Naive thymus-derived CD4-positive, alpha-beta T cell (primary cell): ENCODE measurements at regions of chr17 and their contacts with region 1.

Region 1: GRCh38 chr17:16521070-16521727 is 29.2 kb upstream of the LRRC75A start:
- DNase-seq: peak; percentile 21 to 71 (median 62)
- ATAC-seq: peak; percentile 95
- H3K4me3 ChIP-seq: no peak overlapping the region
- H3K4me3 Mint-ChIP-seq: no peak overlapping the region
- H3K27ac ChIP-seq: no peak overlapping the region
- H3K27ac Mint-ChIP-seq: peak overlapping the region in 1 of 9 donors; percentile 2
- H3K4me1 ChIP-seq: no peaks in the 10 kb centered on the region
- H3K4me1 Mint-ChIP-seq: peaks cover 0 to 13% (median 5%) of the 10 kb centered on the region in 7 donors
- H3K27me3 ChIP-seq: no peaks in the 10 kb centered on the region
- H3K27me3 Mint-ChIP-seq: peaks cover 16 to 38% (median 24%) of the 10 kb centered on the region in 5 donors

Region 2: DNA sequence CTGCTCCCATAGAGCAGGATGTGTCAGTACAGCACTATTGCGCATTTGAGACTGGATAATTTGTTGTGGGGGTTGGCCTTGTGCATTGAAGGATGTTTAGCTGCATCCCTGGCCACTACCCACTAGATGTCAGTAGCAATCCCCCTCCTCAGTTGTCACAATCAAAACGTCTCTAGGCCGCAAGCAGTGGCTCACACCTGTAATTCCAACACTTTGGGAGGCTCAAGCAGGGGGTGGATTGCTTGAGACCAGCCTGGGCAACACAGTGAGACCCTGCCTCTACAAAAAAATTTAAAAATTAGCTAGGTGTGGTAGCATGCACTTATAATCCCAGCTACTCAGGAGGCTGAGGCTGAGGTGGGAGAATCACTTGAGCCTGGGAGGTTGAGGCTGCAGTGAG is 216.4 kb before region 1 on chr17:
- CTCF ChIA-PET with region 1: no interaction called
- POLR2A ChIA-PET with region 1: no interaction called
- intact Hi-C with region 1: loop called in 1 of 2 experiments (anchors 1 kb)
- DNase-seq: peak in 3 of 9 donors; percentile 14 to 30 (median 18)
- ATAC-seq: no peak
- H3K4me3 ChIP-seq: no peak overlapping the region
- H3K4me3 Mint-ChIP-seq: no peak overlapping the region
- H3K27ac ChIP-seq: no peak overlapping the region
- H3K27ac Mint-ChIP-seq: peak overlapping the region in 2 of 9 donors; percentile 12 to 59
- H3K4me1 ChIP-seq: no peaks in the 10 kb centered on the region
- H3K4me1 Mint-ChIP-seq: peaks cover 0 to 12% (median 2%) of the 10 kb centered on the region in 7 donors
- H3K27me3 ChIP-seq: no peaks in the 10 kb centered on the region
- H3K27me3 Mint-ChIP-seq: no peaks in the 10 kb centered on the region

Region 3: DNA sequence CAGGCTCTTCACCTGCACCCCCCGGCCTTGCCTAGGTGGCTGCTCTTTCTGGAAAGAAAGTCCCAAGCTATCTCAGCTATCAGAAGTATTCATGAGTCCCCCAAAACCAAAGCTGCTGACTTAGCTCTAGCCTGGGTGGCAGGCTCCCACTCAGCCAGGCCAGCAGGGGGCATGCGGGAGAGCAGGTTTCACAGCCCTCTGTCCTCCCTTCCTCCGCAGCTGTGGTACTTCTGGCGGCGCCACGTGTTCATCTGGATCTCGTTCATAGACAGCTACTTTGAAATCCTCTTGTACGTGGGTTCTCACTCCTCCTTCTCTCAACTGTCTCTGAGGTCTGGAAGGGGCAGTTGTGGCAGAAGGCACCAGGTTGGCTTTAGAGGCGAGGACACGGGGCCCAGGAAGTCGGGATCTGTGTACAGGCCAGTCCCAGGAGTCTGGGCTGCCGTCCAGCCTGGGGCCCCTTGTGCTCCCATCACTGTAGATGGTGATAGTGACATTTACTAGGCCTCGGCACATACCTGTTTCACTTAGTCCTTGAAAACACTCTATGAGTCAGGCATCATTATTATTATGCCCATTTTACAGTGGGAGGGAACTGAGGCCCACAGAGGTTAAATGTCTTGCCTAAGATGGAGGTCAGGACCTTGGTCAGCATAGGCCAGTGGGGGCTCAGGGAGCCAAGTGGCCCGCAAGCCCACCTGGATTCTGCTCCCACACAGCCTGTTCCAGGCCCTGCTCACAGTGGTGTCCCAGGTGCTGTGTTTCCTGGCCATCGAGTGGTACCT is 92.9 kb before region 1 on chr17:
- CTCF ChIA-PET with region 1: interaction called, 6 read pairs
- POLR2A ChIA-PET with region 1: no interaction called
- intact Hi-C with region 1: loop called in 1 of 2 experiments (anchors 1 kb)
- DNase-seq: peak in 5 of 9 donors; percentile 30 to 38 (median 34)
- ATAC-seq: peak; percentile 76
- H3K4me3 ChIP-seq: no peak overlapping the region
- H3K4me3 Mint-ChIP-seq: no peak overlapping the region
- H3K27ac ChIP-seq: peak overlapping the region; percentile 18
- H3K27ac Mint-ChIP-seq: peak overlapping the region in 2 of 9 donors; percentile 36 to 67
- H3K4me1 ChIP-seq: no peaks in the 10 kb centered on the region
- H3K4me1 Mint-ChIP-seq: peaks cover 0 to 8% (median 0%) of the 10 kb centered on the region in 7 donors
- H3K27me3 ChIP-seq: no peaks in the 10 kb centered on the region
- H3K27me3 Mint-ChIP-seq: no peaks in the 10 kb centered on the region

Region 4: GRCh38 chr17:16456742-16457316 is 64.4 kb before region 1 on chr17:
- CTCF ChIA-PET with region 1: interaction called, 52 read pairs
- POLR2A ChIA-PET with region 1: no interaction called
- intact Hi-C with region 1: loop called (anchors 1 kb)
- DNase-seq: no peak
- ATAC-seq: no peak
- H3K4me3 ChIP-seq: no peak overlapping the region
- H3K4me3 Mint-ChIP-seq: no peak overlapping the region
- H3K27ac ChIP-seq: no peak overlapping the region
- H3K27ac Mint-ChIP-seq: peak overlapping the region in 2 of 9 donors; percentile 23 to 45
- H3K4me1 ChIP-seq: no peaks in the 10 kb centered on the region
- H3K4me1 Mint-ChIP-seq: peaks cover 0 to 14% (median 7%) of the 10 kb centered on the region in 7 donors
- H3K27me3 ChIP-seq: no peaks in the 10 kb centered on the region
- H3K27me3 Mint-ChIP-seq: no peaks in the 10 kb centered on the region

Region 5: GRCh38 chr17:16551878-16552636 is 30.9 kb after region 1 on chr17:
- CTCF ChIA-PET with region 1: no interaction called
- POLR2A ChIA-PET with region 1: no interaction called
- intact Hi-C with region 1: no loop called
- DNase-seq: no peak
- ATAC-seq: no peak
- H3K4me3 ChIP-seq: no peak overlapping the region
- H3K4me3 Mint-ChIP-seq: no peak overlapping the region
- H3K27ac ChIP-seq: no peak overlapping the region
- H3K27ac Mint-ChIP-seq: no peak overlapping the region
- H3K4me1 ChIP-seq: no peaks in the 10 kb centered on the region
- H3K4me1 Mint-ChIP-seq: no peaks in the 10 kb centered on the region
- H3K27me3 ChIP-seq: no peaks in the 10 kb centered on the region
- H3K27me3 Mint-ChIP-seq: no peaks in the 10 kb centered on the region